Transverse colon (tissue), 4 donors: ENCODE measurements at regions of chr12 and their contacts with region 1.

Region 1: GRCh38 chr12:29769162-29769858 is 14.4 kb downstream of the TMTC1 start:
- DNase-seq: no peak
- H3K4me3 ChIP-seq: no peak overlapping the region
- H3K27ac ChIP-seq: no peak overlapping the region
- H3K4me1 ChIP-seq: no peaks in the 10 kb centered on the region
- H3K27me3 ChIP-seq: no peaks in the 10 kb centered on the region
- CTCF ChIP-seq: no peak
- EP300 ChIP-seq: no peak
- POLR2A ChIP-seq: no peak

Region 2: DNA sequence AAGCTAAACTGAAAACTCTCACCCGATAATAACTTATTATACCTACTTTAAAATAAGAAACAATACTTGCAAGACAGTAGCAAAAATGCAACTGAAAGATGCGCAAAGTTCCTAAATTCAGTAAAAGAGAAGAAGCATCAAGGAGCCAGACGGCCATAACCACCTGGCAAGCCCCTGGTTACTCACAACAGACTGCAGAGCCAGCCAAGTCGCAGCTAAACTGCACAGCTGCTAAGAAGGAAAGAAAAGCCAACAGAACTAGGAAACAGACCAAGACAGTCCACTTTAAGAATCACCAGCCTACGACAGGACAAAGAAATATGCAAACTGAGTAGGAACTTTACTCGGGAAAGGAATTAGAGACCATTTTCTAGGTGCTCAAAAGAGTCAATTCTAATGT is 113.4 kb before region 1 on chr12:
- in situ Hi-C with region 1: loop called in 1 of 4 experiments (anchors 25 kb)
- intact Hi-C with region 1: no loop called
- DNase-seq: no peak
- H3K4me3 ChIP-seq: no peak overlapping the region
- H3K27ac ChIP-seq: no peak overlapping the region
- H3K4me1 ChIP-seq: no peaks in the 10 kb centered on the region
- H3K27me3 ChIP-seq: no peaks in the 10 kb centered on the region
- CTCF ChIP-seq: no peak
- EP300 ChIP-seq: no peak
- POLR2A ChIP-seq: no peak